Activated CD4-positive, alpha-beta T cell treated with anti-CD3 and anti-CD28 coated beads, Interleukin-2, amount 10 ng/mL, durations not matched to agents 7 days and 5 days (primary cell): ENCODE measurements at regions of chr20 and their contacts with region 1.

Region 1: DNA sequence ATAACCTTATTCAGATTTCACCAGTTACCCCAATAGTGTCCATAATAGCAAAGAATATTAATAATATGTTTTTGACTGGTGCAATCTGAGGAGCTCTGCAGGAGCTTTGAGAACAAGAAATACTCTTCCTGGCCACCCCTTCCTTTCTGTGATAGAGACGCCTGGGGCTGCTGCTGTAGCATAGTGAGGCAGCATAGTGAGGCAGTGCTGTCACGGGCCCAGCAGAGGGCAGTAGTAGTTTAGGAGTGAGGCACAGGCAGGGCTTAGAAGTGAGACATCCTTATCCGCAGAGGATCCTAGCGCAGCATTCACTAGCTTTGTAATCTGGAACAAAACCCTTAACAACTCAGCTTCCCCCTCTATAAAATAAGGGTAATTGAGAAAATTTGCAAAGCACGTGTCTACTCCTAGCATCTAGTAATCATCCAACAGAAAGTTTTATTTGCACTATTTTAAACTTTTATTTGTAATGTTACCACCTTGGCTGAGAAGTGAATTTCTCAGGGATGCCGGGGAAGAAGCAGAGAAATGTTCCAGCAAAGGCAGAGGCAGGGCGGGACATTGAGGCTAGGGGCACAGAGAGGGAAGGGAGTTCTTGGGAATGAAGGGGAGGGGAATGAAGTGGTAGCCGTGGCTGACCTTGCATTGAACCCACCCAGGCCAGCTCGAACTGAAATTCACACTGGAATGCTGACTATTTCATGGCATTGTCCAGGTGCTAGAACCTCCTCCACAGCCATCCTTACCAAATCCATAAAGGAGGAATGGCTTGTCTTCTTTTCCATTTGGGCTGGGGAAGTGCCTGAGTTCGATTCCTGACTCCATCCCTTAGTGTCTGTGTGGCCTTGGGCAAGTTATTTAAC is 78.8 kb downstream of the CDS2 start:
- DNase-seq: peak; percentile 76
- H3K4me3 Mint-ChIP-seq: no peak overlapping the region
- H3K27ac Mint-ChIP-seq: no peak overlapping the region
- H3K4me1 Mint-ChIP-seq: no peaks in the 10 kb centered on the region
- H3K27me3 Mint-ChIP-seq: no peaks in the 10 kb centered on the region

Region 2: GRCh38 chr20:5234158-5234557 is 28.6 kb after region 1 on chr20:
- CTCF ChIA-PET with region 1: no interaction called
- POLR2A ChIA-PET with region 1: no interaction called
- DNase-seq: no peak
- H3K4me3 Mint-ChIP-seq: no peak overlapping the region
- H3K27ac Mint-ChIP-seq: no peak overlapping the region
- H3K4me1 Mint-ChIP-seq: no peaks in the 10 kb centered on the region
- H3K27me3 Mint-ChIP-seq: peaks cover 47% of the 10 kb centered on the region

Region 3: DNA sequence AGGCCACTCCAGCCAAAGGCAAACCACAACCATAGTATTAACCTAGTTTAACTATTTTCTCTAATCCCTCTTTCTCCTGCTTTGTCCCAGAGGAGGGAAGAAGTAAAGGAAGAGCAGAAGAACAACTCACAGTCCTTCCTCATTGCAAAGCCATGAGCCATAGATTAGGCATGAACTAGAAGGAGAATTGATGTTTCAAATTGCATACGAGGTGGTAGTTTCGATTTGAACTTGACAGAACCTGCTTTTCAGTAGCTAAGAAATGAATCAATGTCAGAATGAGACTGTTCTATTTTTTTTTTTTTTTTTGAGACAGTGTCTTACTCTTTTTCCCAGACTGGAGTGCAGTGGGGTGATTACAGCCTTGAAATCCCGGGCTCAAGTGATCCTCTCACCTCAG is 62.9 kb after region 1 on chr20:
- CTCF ChIA-PET with region 1: no interaction called
- POLR2A ChIA-PET with region 1: no interaction called
- DNase-seq: no peak
- H3K4me3 Mint-ChIP-seq: no peak overlapping the region
- H3K27ac Mint-ChIP-seq: no peak overlapping the region
- H3K4me1 Mint-ChIP-seq: no peaks in the 10 kb centered on the region
- H3K27me3 Mint-ChIP-seq: peaks cover 17% of the 10 kb centered on the region

Region 4: DNA sequence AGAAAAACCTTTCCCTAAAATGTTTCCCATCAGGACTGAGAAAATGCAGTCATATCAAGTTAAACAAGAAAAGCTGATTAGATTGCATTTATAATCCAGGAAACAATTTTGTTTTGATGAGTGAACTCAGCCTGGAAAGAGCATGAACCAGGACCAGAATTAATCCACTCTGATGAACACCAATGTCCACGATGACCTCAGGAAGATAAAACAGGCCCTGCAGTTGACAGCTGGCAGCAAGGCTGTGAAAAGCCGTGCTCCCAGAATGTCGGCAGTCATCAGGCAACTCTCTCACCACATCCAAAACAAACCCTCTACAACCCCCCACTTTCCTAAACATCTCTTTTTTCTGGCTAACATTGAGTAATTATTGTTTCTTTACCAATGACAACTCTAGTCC is 185.1 kb after region 1 on chr20:
- CTCF ChIA-PET with region 1: no interaction called
- POLR2A ChIA-PET with region 1: interaction called, 11 read pairs
- DNase-seq: no peak
- H3K4me3 Mint-ChIP-seq: no peak overlapping the region
- H3K27ac Mint-ChIP-seq: no peak overlapping the region
- H3K4me1 Mint-ChIP-seq: no peaks in the 10 kb centered on the region
- H3K27me3 Mint-ChIP-seq: peaks cover 19% of the 10 kb centered on the region